Activated CD8-positive, alpha-beta memory T cell treated with anti-CD3 and anti-CD28 coated beads, Interleukin-2, amount 10 ng/mL, durations not matched to agents 7 days and 5 days (primary cell): ENCODE measurements at regions of chr19 and their contacts with region 1.

Region 1: DNA sequence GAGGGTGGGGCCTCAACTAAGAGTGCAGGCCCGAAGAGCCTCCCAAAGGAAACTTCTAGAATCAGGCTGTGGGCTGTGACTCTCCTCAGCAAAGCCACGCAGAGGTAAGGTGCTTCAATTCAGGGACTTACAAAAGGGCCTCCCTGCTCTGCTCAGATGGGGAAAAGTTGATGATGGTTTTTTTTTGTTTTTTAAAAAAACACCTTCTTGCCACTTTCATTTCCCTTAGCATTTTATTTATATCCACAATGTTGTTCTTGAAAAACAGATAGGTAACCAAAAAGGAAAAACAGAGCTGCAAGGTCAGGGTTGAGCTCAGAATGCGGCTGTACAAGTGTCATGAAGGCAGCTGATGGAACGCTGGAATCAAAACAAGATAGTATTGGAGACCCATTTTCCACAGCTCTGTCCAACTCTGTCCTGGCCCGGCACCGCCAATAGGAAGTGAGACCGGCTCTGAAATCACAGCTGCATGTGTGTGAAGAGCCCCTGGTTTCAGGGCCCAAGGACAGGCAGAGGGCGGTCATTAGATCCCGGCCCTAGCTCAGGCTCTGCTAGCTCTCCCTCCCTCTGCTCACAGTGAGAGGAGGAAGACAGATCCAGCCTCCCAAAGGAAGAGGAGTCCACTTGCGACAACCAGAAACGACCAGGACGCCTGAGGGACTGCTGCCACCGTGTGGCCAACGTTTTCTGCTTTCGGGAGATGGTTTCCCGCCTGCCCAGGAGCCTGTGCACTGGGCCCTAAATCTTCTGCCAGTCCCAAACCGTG is 58.3 kb downstream of the KLF2 start:
- DNase-seq: peak; percentile 85
- ATAC-seq: peak; percentile 71
- H3K4me3 Mint-ChIP-seq: no peak overlapping the region
- H3K27ac Mint-ChIP-seq: peak overlapping the region; percentile 73
- H3K4me1 Mint-ChIP-seq: peaks cover 27% of the 10 kb centered on the region
- H3K27me3 Mint-ChIP-seq: no peaks in the 10 kb centered on the region

Region 2: DNA sequence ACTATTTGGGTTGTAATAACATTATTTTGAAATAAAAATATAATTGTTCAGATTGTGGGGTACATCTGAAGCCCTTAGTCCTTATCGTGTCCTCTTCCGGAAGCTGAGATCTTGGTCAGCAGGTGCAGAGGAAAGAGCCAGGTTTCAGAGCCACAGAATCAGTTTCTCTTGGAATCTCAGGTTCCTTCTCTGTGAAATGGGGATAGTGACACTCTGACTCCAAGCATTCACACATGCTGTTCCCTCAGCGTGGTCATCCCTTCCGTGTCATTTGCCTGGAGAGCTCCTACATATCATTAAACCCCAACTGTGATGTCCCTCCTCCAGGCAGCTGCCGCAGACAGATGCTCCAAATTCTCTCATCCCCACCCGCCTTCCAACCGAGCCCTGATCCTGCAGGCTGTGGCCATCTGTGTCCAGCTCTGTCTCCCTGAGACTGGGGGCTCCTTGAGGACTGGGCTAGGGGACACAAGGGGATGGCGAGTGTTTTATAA is 125.4 kb before region 1 on chr19:
- CTCF ChIA-PET with region 1: interaction called, 18 read pairs
- DNase-seq: no peak
- ATAC-seq: no peak
- H3K4me3 Mint-ChIP-seq: no peak overlapping the region
- H3K27ac Mint-ChIP-seq: no peak overlapping the region
- H3K4me1 Mint-ChIP-seq: peaks cover 44% of the 10 kb centered on the region
- H3K27me3 Mint-ChIP-seq: peaks cover 10% of the 10 kb centered on the region

Region 3: GRCh38 chr19:16324384-16325160 is 58.4 kb before region 1 on chr19 and contains the start of gene KLF2:
- CTCF ChIA-PET with region 1: interaction called, 449 read pairs
- DNase-seq: peak; percentile 93
- ATAC-seq: peak; percentile 69
- H3K4me3 Mint-ChIP-seq: peak within 1 kb of the TSS; percentile 98
- H3K27ac Mint-ChIP-seq: peak within 1 kb of the TSS; percentile 57
- H3K4me1 Mint-ChIP-seq: peaks cover 52% of the 10 kb centered on the region
- H3K27me3 Mint-ChIP-seq: peaks cover 51% of the 10 kb centered on the region
- total RNA-seq, gene KLF2: 62.1 to 124 TPM

Region 4: DNA sequence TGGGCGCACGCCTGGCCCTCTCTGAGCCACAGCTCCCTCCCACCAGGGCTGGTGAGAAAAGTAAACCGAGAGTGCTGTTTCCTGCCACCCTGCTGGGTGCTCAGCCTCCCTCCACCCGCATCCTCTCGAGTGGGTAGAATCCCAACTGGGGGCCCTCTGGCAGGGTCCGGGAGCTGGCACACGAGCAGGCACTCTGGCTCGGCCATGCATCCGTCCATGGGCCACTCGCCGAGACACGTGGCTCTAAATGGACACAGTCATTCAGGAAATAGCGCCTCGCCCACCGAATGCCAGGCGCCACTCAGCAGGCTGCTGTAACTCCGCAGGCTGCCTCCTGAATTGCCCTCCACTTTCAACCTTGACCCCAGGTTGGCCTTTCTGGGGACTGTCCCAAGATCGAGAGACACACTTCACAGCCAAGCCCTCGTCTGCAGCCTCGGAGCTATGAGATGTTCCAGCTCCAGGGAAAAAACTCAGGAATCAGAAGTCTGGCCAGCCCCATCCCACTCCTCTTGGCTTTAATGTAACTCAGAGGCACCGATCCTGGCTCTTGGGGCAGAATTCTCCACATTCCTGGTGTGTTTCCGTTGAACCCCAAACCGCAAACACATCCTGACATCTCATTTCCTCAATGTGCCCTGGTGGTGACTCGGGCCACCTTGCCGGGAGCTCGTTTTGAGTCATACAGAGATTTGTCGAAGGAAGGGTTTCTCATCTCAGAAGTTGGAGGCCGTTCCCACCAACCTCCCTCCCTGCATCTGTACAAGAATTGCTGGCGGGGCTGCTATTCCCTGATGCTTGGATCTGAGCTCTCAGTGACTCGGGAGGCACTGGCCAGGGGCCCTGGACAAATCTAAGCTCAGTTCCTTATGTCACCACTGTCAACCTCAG is 44.2 kb before region 1 on chr19:
- CTCF ChIA-PET with region 1: interaction called, 449 read pairs
- DNase-seq: peak; percentile 91
- ATAC-seq: peak; percentile 67
- H3K4me3 Mint-ChIP-seq: peak overlapping the region; percentile 60
- H3K27ac Mint-ChIP-seq: peak overlapping the region; percentile 87
- H3K4me1 Mint-ChIP-seq: peaks cover 70% of the 10 kb centered on the region
- H3K27me3 Mint-ChIP-seq: peaks cover 19% of the 10 kb centered on the region

Region 5: DNA sequence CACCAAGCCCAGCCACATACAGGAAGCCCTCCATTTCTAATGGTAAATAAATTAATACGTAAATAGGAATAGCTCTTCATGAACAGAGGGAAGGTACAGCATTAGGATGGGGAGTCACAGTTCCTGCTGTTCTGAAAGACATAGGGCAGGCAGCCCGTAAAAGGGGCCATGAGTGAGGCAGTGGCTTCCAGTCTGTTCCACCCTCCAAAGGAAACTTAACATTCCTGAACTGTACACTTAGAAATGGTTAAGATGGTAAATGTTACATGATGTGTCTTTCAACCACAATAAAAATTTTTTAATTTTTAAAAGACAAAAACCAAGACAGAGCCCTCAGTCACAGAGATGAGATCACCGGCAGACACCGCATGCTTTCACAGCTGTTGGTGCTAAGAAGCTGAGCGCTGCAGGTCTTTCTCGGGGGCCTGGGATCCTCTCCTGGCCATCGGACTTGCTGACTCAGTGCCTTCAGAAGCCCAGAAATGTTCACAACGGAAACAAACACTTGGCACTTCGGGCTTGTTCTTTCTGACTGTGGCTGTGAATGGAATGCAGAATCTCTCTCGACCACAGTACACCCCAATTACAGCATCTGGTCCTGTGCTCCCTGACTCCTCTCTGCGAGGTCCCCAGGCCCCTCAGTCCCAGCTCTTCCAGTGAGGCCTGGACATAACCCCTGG is 52.4 kb after region 1 on chr19:
- CTCF ChIA-PET with region 1: no interaction called
- DNase-seq: no peak
- ATAC-seq: no peak
- H3K4me3 Mint-ChIP-seq: no peak overlapping the region
- H3K27ac Mint-ChIP-seq: no peak overlapping the region
- H3K4me1 Mint-ChIP-seq: peaks cover 22% of the 10 kb centered on the region
- H3K27me3 Mint-ChIP-seq: no peaks in the 10 kb centered on the region